ENCODE measurements at regions of chr20 and their contacts with region 1.

Region 1: DNA sequence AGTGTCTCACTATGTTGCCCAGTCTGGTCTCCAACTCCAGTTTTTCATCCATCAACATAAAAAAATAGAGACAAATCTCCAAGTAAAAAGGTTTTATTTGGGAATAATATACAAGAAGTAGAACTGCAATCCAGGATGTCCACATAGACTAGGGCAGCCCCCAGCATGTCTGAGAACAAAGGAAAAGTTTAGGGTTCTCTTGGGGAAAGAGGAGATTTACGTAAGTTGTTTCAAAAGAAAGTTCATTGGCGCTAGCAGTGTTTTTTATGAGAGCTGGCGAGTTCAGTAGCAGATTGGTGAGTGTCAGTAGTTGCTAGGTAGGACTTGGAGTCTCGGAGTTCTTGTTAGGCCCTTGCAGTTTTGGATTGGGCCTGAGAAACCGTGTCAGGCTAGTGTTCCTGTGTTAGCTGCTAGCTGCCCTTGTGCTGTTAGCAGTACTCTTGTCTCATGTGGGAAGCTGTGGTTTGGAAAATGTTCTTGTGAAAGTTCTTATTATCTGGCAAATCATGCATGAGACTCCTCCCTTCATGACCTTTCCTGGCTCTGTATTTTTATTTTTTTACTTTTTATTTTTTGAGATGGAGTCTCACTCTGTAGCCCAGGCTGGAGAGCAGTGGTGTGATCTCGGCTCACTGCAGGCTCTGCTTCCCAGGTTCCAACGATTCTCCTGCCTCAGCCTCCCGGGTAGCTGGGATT is 24.7 kb downstream of the TTLL9 start:
- DNase-seq: peak in 2 of 10 donors; percentile 27 to 34
- H3K4me3 ChIP-seq: peak overlapping the region in 3 of 59 donors; percentile 4 to 7 (median 5)
- H3K27ac ChIP-seq: peak overlapping the region in 21 of 59 donors; percentile 3 to 70 (median 32)
- H3K27me3 ChIP-seq: no peaks in the 10 kb centered on the region
- CTCF ChIP-seq: no peak

Region 2: GRCh38 chr20:31934968-31935764 is 40.0 kb after region 1 on chr20:
- intact Hi-C with region 1: loop called in 1 of 2 experiments (anchors 5 kb)
- DNase-seq: no peak
- H3K4me3 ChIP-seq: no peak overlapping the region
- H3K27ac ChIP-seq: no peak overlapping the region
- H3K27me3 ChIP-seq: no peaks in the 10 kb centered on the region
- CTCF ChIP-seq: no peak

Measured in dorsolateral prefrontal cortex (tissue), 120 donors.